Activated T-helper 1 cell treated with anti-CD3 and anti-CD28 coated beads, Interleukin-12 subunit alpha, Interleukin-12 subunit beta, Interleukin-2, Interleukin-4 antibody, amounts not matched to agents 30 ng/mL and 10 ng/mL and 1 ng/mL, durations not matched to agents 14 hours and 24 hours and 36 hours (primary cell): ENCODE measurements at regions of chr1 and their contacts with region 1.

Region 1: GRCh38 chr1:172662464-172663109 is 3.7 kb downstream of the FASLG start:
- DNase-seq: peak; percentile 79
- H3K4me3 Mint-ChIP-seq: peak overlapping the region; percentile 96
- H3K27ac Mint-ChIP-seq: peak overlapping the region; percentile 89
- H3K4me1 Mint-ChIP-seq: peaks cover 81% of the 10 kb centered on the region
- H3K27me3 Mint-ChIP-seq: no peaks in the 10 kb centered on the region

Region 2: GRCh38 chr1:172338295-172338735 is 324.3 kb before region 1 on chr1:
- intact Hi-C with region 1: loop called (anchors 2 kb)
- DNase-seq: peak; percentile 6
- H3K4me3 Mint-ChIP-seq: no peak overlapping the region
- H3K27ac Mint-ChIP-seq: peak overlapping the region; percentile 70
- H3K4me1 Mint-ChIP-seq: peaks cover 44% of the 10 kb centered on the region
- H3K27me3 Mint-ChIP-seq: no peaks in the 10 kb centered on the region

Region 3: DNA sequence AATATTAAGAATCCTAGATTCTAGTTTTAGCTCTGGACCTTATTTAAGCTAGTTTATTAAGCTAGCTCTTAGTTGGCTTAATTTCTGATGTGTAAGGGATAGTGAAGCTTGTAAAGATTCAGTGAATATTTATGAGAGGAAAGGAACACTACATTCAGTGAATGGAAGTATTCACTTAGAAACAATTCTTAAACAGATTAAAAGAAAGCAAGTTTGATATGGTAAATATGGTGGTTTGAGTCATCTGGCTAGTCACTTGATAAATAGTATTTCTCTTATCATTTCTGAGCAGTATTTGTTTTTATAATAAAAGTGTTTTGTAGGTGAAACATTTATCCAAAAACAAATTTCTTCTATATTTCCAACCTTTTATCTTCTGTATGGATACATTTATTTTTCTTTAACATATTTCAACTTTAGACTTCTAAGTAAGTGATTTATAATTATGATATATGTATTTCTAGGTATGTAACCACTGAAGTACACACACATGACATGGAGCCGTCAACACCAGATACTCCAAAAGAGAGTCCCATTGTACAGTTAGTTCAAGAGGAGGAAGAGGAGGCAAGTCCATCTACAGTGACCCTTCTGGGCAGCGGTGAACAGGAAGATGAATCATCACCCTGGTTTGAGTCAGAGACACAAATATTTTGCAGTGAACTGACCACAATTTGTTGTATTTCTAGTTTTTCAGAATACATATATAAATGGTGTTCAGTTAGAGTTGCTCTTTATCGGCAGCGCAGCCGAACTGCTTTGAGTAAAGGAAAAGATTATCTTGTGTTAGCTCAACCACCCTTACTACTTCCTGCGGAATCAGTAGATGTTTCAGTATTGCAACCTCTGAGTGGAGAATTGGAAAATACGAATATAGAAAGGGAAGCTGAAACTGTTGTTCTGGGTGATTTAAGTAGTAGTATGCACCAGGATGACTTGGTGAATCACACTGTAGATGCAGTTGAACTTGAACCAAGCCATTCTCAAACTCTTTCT is 74.0 kb before region 1 on chr1:
- intact Hi-C with region 1: loop called (anchors 2 kb)
- DNase-seq: no peak
- H3K4me3 Mint-ChIP-seq: peak overlapping the region; percentile 32
- H3K27ac Mint-ChIP-seq: peak overlapping the region; percentile 83
- H3K4me1 Mint-ChIP-seq: peaks cover 20% of the 10 kb centered on the region
- H3K27me3 Mint-ChIP-seq: no peaks in the 10 kb centered on the region

Region 4: GRCh38 chr1:172599912-172600311 is 62.7 kb before region 1 on chr1:
- intact Hi-C with region 1: no loop called
- DNase-seq: no peak
- H3K4me3 Mint-ChIP-seq: no peak overlapping the region
- H3K27ac Mint-ChIP-seq: no peak overlapping the region
- H3K4me1 Mint-ChIP-seq: peaks cover 22% of the 10 kb centered on the region
- H3K27me3 Mint-ChIP-seq: no peaks in the 10 kb centered on the region

Region 5: GRCh38 chr1:172647110-172647564 is 15.4 kb before region 1 on chr1:
- intact Hi-C with region 1: loop called (anchors 1 kb)
- DNase-seq: no peak
- H3K4me3 Mint-ChIP-seq: peak overlapping the region; percentile 27
- H3K27ac Mint-ChIP-seq: peak overlapping the region; percentile 74
- H3K4me1 Mint-ChIP-seq: peaks cover 84% of the 10 kb centered on the region
- H3K27me3 Mint-ChIP-seq: peaks cover 2% of the 10 kb centered on the region

Region 6: GRCh38 chr1:172719694-172720138 is 57.1 kb after region 1 on chr1:
- intact Hi-C with region 1: loop called (anchors 1 kb)
- DNase-seq: no peak
- H3K4me3 Mint-ChIP-seq: peak overlapping the region; percentile 6
- H3K27ac Mint-ChIP-seq: peak overlapping the region; percentile 73
- H3K4me1 Mint-ChIP-seq: peaks cover 49% of the 10 kb centered on the region
- H3K27me3 Mint-ChIP-seq: no peaks in the 10 kb centered on the region

Region 7: GRCh38 chr1:173867753-173868265 is 1205.2 kb after region 1 on chr1 and contains the start of gene GAS5:
- intact Hi-C with region 1: loop called (anchors 5 kb)
- DNase-seq: peak; percentile 99
- H3K4me3 Mint-ChIP-seq: peak within 1 kb of the TSS; percentile 98
- H3K27ac Mint-ChIP-seq: peak within 1 kb of the TSS; percentile 98
- H3K4me1 Mint-ChIP-seq: peaks cover 66% of the 10 kb centered on the region
- H3K27me3 Mint-ChIP-seq: no peaks in the 10 kb centered on the region
- total RNA-seq, gene GAS5: 653 and 688 TPM in 2 replicates